ENCODE measurements at regions of chr3 and their contacts with region 1.

Region 1: GRCh38 chr3:138397983-138398382 is 36.4 kb upstream of the ESYT3 start:
- DNase-seq: no peak
- ATAC-seq: no peak

Region 2: DNA sequence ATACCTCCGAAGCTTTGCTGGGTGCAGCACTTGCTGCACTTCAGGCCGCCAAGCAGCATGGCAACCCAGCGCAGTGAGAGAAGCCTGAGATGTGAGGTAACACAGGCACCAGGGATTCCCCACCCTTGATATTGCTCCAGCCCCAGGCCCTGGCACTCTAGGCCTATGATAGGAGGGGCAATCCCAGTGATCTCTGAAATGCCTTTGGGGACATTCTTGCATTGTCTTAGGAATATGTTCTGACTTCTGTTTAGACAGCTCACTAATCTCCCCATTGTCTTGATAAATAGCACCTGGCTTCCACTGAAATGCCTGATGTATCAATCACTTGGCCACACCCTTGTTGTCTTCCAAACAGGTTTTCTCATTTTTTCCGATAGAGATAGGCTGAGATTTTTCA is 531.1 kb before region 1 on chr3:
- intact Hi-C with region 1: no loop called
- DNase-seq: no peak
- ATAC-seq: no peak

Region 3: DNA sequence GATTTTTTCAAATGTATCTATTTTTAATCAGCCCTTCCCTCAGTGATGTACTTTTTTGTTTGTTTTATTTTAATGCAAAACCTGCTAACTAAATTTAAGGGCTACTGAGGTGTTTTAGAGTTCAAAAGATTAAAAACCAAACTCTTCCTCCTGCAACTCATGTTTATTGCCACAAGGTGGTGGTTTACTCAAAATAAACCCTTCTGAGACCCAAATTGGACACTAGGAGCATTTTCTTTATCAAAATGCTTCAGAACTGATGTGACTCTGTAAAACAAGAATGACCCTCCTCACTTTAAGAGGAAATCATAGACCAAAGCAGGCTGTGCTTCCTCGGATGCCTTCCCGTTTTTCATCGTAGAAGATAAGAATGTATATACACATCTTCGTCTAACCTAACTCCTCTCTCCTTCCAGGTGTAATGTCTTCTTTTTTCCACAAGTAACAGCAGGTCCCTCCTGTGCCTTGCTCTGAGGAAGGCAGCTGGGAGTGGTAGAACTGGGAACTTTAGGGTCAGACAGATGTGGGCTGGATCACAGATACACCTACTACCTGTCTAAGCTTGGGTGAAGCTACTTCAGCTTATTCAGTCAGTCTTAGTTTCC is 65.4 kb before region 1 on chr3:
- intact Hi-C with region 1: loop called (anchors 5 kb)
- DNase-seq: no peak
- ATAC-seq: no peak

Region 4: GRCh38 chr3:138349926-138350665 is 47.9 kb before region 1 on chr3:
- intact Hi-C with region 1: loop called (anchors 5 kb)
- DNase-seq: no peak
- ATAC-seq: no peak